PC-9 (cell line): ENCODE measurements at regions of chr17 and their contacts with region 1.

Region 1: GRCh38 chr17:40340880-40341807 is 23.4 kb downstream of the GJD3 start:
- DNase-seq: peak; percentile 73 to 82
- H3K4me3 ChIP-seq: peak overlapping the region; percentile 65
- H3K27ac ChIP-seq: peak overlapping the region; percentile 49
- H3K4me1 ChIP-seq: peaks cover 12% of the 10 kb centered on the region; the same call in 1 of the 2 replicates
- H3K27me3 ChIP-seq: no peaks in the 10 kb centered on the region
- CTCF ChIP-seq: peak; percentile 43; the same call in 1 of the 2 replicates

Region 2: GRCh38 chr17:40311575-40311974 is 29.6 kb before region 1 on chr17:
- CTCF ChIA-PET with region 1: interaction called, 3 read pairs
- POLR2A ChIA-PET with region 1: interaction called, 3 read pairs
- intact Hi-C with region 1: loop called (anchors 2 kb)
- DNase-seq: peak; percentile 89 to 90
- H3K4me3 ChIP-seq: no peak overlapping the region
- H3K27ac ChIP-seq: peak overlapping the region; percentile 76
- H3K4me1 ChIP-seq: peaks cover 95% of the 10 kb centered on the region
- H3K27me3 ChIP-seq: no peaks in the 10 kb centered on the region
- CTCF ChIP-seq: no peak

Region 3: DNA sequence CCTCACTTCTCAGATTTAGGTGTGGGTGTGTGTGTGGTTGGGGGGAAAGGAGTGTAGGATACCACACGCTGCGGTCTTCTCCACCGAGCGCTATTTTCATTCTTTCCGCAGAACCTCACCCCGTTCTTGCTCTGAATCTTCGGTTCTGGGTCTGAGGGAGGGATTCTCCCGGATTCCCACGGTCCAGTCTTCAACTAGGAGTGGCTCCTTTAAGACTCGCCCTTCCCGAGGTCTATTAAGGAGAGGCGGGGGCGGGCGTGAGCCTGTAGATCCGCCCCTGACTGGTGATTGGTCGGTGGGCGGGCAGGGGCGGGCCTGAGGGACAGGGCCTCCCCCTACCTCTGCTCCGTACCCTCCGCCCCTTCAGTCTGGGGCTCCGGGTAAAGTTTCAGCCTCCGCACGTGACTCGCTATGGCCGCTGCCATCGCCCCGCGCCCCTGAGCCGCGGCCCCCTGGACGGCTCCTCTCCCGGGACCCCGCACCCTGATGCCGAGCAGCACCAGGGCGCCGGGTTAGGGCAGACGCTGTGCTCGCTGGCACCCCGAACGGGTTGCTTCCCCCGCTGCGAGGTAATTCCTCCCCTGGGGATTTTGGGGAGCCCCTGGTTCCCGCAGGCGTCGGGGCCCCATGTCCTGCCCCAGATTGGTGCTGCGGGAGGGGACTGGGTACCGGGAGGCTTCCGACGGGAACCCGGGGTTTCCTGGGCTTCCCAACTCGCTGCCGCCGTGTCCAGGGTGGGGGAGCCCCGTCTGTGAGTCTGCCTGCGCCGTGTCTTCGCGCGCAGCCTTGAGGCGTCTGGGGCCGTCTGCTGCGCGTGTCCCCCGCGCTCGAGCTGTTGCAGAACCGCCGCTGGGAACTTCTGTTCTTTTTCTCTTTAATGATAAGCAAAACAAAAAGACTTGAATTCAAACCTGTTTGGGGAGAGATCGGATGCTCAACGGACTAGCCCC is 23.0 kb before region 1 on chr17:
- CTCF ChIA-PET with region 1: interaction called, 11 read pairs
- POLR2A ChIA-PET with region 1: no interaction called
- intact Hi-C with region 1: loop called (anchors 2 kb)
- DNase-seq: peak; percentile 88 to 90
- H3K4me3 ChIP-seq: peak overlapping the region; percentile 99
- H3K27ac ChIP-seq: peak overlapping the region; percentile 75
- H3K4me1 ChIP-seq: peaks cover 85% of the 10 kb centered on the region
- H3K27me3 ChIP-seq: no peaks in the 10 kb centered on the region
- CTCF ChIP-seq: no peak

Region 4: GRCh38 chr17:40355123-40355803 is 14.1 kb after region 1 on chr17:
- CTCF ChIA-PET with region 1: interaction called, 14 read pairs
- POLR2A ChIA-PET with region 1: no interaction called
- intact Hi-C with region 1: no loop called
- DNase-seq: peak in 1 of 2 experiments; percentile 63
- H3K4me3 ChIP-seq: no peak overlapping the region
- H3K27ac ChIP-seq: no peak overlapping the region
- H3K4me1 ChIP-seq: peaks cover 23% of the 10 kb centered on the region
- H3K27me3 ChIP-seq: no peaks in the 10 kb centered on the region
- CTCF ChIP-seq: peak; percentile 93

Region 5: DNA sequence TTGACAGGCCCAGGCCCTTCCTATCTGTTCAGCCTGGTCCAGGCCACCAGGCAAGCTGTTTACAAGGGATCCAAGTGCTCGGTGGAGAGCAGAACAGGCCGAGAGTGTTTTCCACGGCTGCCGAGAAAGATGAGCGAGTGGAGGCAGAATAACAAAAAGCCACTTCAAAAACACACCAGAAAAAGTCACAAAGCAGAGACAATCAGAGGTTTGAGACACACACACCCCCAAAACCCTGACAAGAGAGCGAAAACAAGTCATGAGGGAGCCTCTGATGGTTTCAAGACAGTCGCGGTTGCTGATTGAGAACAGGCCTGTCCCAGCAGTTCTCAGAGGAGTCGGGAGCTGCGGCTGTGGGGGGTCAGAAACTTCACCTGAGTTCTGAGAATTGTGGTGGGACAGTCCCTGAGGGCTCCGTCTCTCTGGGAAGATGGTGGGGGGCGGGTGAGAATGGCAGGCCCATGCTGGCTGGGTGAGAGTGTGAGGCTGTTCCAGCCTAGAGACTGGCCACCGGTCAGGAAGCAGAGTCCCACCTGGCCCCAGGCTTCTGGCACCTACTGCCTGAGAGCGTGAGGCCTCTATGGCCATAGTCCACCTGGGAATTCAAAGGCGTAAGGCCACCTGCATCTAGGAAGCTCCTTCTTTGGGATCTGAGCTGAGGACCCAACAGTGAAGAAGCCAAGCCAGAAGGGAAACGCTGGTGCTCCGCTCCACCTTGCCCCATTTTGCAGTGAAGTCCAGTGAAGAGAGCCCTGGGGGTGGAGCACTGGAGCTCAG is 261.8 kb after region 1 on chr17:
- CTCF ChIA-PET with region 1: no interaction called
- POLR2A ChIA-PET with region 1: no interaction called
- intact Hi-C with region 1: no loop called
- DNase-seq: no peak
- H3K4me3 ChIP-seq: no peak overlapping the region
- H3K27ac ChIP-seq: no peak overlapping the region
- H3K4me1 ChIP-seq: peaks cover 30% of the 10 kb centered on the region
- H3K27me3 ChIP-seq: no peaks in the 10 kb centered on the region
- CTCF ChIP-seq: no peak